ENCODE measurements at regions of chr20 and their contacts with region 1.

Region 1: DNA sequence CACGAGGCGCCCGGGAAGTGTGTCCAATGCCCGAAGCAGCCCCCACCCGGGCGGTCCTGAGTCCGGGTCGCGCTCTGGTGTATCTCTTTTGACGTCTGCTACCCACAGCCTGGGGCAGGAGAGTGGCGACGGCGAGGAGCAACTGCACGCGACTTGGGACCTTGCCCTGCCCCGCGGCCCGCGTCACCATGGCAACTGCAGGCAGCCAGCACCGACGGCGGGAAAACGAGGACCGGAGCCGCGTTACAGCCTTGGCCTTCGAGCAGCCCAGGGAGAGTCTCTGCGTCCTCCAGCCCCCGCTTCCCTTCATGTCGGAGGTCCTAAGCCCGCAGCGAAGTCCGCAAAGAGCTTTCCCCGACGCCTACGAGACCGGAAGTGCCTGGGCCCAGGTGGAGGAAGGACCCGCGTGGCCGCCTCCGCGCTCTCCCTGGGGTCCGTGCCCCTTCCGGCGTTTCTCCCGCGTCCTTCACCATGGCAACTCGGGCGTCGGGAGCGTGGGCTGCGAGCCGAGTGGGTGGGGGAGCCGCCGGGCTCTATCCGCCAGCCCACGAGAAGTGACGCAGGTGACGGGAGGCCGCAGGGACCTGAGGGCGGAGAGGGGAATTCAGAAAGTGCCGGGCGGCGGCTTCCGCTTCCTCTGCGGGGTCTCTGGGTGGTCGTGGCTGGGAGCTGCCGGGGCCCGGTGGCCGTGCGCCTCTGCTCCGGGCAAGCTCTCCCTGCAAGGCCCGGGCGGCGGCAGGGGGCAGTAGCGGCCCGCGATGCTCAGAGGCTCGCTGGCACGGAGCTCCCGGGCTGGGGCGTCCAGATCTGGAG is 88.6 kb upstream of the TGM3 start:
- DNase-seq: peak; percentile 53
- H3K4me3 ChIP-seq: peak overlapping the region; percentile 2 to 41 (median 37)
- H3K27ac ChIP-seq: no peak overlapping the region
- H3K4me1 ChIP-seq: peaks cover 5% of the 10 kb centered on the region
- H3K27me3 ChIP-seq: peaks cover 4 to 5% of the 10 kb centered on the region in 2 experiments
- CTCF ChIP-seq: peak; percentile 76 to 88
- POLR2A ChIP-seq: no peak

Region 2: GRCh38 chr20:2109425-2110210 is 97.5 kb before region 1 on chr20:
- CTCF ChIA-PET with region 1: no interaction called
- POLR2A ChIA-PET with region 1: no interaction called
- dilution Hi-C with region 1: no loop called
- intact Hi-C with region 1: no loop called
- DNase-seq: no peak
- H3K4me3 ChIP-seq: no peak overlapping the region
- H3K27ac ChIP-seq: no peak overlapping the region
- H3K4me1 ChIP-seq: peaks cover 9% of the 10 kb centered on the region
- H3K27me3 ChIP-seq: no peaks in the 10 kb centered on the region
- CTCF ChIP-seq: no peak
- POLR2A ChIP-seq: no peak

Region 3: GRCh38 chr20:2289471-2289872 is 82.3 kb after region 1 on chr20:
- CTCF ChIA-PET with region 1: interaction called, 5 read pairs
- POLR2A ChIA-PET with region 1: no interaction called
- dilution Hi-C with region 1: no loop called
- intact Hi-C with region 1: loop called (anchors 1 kb)
- DNase-seq: no peak
- H3K4me3 ChIP-seq: no peak overlapping the region
- H3K27ac ChIP-seq: peak overlapping the region; percentile 50
- H3K4me1 ChIP-seq: peaks cover 30% of the 10 kb centered on the region
- H3K27me3 ChIP-seq: no peaks in the 10 kb centered on the region
- CTCF ChIP-seq: no peak
- POLR2A ChIP-seq: no peak

Region 4: DNA sequence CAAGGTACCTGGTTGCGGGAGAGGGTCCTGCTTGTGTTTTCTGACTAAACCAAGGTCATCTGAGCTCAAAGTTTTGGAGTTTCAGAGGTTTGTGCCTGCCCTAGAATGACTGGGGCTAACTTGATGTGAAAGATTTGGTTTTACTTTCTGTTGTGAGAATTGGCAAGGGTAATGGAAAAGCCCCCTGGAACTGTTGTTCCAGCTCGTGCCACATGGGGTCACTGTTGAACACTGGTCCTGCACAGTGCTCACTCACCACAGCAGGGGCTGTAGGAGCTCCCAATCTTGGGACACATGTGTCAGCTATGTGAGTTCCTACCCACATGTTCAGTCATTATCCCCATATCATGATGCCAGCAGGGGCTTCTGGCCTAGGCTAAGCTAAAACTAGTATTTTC is 180.0 kb after region 1 on chr20:
- CTCF ChIA-PET with region 1: interaction called, 11 read pairs
- POLR2A ChIA-PET with region 1: no interaction called
- dilution Hi-C with region 1: no loop called
- intact Hi-C with region 1: no loop called
- DNase-seq: peak; percentile 33
- H3K4me3 ChIP-seq: no peak overlapping the region
- H3K27ac ChIP-seq: no peak overlapping the region
- H3K4me1 ChIP-seq: no peaks in the 10 kb centered on the region
- H3K27me3 ChIP-seq: no peaks in the 10 kb centered on the region
- CTCF ChIP-seq: peak; percentile 45 to 59
- POLR2A ChIP-seq: no peak

Region 5: GRCh38 chr20:2451939-2452732 is 245.0 kb after region 1 on chr20:
- CTCF ChIA-PET with region 1: interaction called, 55 read pairs
- POLR2A ChIA-PET with region 1: no interaction called
- dilution Hi-C with region 1: no loop called
- intact Hi-C with region 1: loop called (anchors 1 kb)
- DNase-seq: peak; percentile 62
- H3K4me3 ChIP-seq: no peak overlapping the region
- H3K27ac ChIP-seq: no peak overlapping the region
- H3K4me1 ChIP-seq: no peaks in the 10 kb centered on the region
- H3K27me3 ChIP-seq: no peaks in the 10 kb centered on the region
- CTCF ChIP-seq: peak; percentile 84 to 90
- POLR2A ChIP-seq: no peak